Transverse colon (tissue), 4 donors: ENCODE measurements at regions of chr2 and their contacts with region 1.

Region 1: GRCh38 chr2:769771-770170 is 92.6 kb upstream of the TMEM18 start:
- DNase-seq: no peak
- H3K4me3 ChIP-seq: no peak overlapping the region
- H3K27ac ChIP-seq: no peak overlapping the region
- H3K4me1 ChIP-seq: no peaks in the 10 kb centered on the region
- H3K27me3 ChIP-seq: no peaks in the 10 kb centered on the region
- CTCF ChIP-seq: no peak
- EP300 ChIP-seq: no peak
- POLR2A ChIP-seq: no peak

Region 2: GRCh38 chr2:479490-480176 is 290.1 kb before region 1 on chr2:
- in situ Hi-C with region 1: no loop called
- intact Hi-C with region 1: no loop called
- DNase-seq: no peak
- H3K4me3 ChIP-seq: peak overlapping the region in 2 of 4 donors; percentile 6 to 16
- H3K27ac ChIP-seq: no peak overlapping the region
- H3K4me1 ChIP-seq: no peaks in the 10 kb centered on the region
- H3K27me3 ChIP-seq: peaks cover 5% of the 10 kb centered on the region
- CTCF ChIP-seq: no peak
- EP300 ChIP-seq: no peak
- POLR2A ChIP-seq: no peak

Region 3: GRCh38 chr2:746697-747096 is 23.1 kb before region 1 on chr2:
- in situ Hi-C with region 1: no loop called
- intact Hi-C with region 1: loop called (anchors 1 kb)
- DNase-seq: no peak
- H3K4me3 ChIP-seq: no peak overlapping the region
- H3K27ac ChIP-seq: no peak overlapping the region
- H3K4me1 ChIP-seq: no peaks in the 10 kb centered on the region
- H3K27me3 ChIP-seq: peaks cover 16% of the 10 kb centered on the region
- CTCF ChIP-seq: no peak
- EP300 ChIP-seq: no peak
- POLR2A ChIP-seq: no peak

Region 4: DNA sequence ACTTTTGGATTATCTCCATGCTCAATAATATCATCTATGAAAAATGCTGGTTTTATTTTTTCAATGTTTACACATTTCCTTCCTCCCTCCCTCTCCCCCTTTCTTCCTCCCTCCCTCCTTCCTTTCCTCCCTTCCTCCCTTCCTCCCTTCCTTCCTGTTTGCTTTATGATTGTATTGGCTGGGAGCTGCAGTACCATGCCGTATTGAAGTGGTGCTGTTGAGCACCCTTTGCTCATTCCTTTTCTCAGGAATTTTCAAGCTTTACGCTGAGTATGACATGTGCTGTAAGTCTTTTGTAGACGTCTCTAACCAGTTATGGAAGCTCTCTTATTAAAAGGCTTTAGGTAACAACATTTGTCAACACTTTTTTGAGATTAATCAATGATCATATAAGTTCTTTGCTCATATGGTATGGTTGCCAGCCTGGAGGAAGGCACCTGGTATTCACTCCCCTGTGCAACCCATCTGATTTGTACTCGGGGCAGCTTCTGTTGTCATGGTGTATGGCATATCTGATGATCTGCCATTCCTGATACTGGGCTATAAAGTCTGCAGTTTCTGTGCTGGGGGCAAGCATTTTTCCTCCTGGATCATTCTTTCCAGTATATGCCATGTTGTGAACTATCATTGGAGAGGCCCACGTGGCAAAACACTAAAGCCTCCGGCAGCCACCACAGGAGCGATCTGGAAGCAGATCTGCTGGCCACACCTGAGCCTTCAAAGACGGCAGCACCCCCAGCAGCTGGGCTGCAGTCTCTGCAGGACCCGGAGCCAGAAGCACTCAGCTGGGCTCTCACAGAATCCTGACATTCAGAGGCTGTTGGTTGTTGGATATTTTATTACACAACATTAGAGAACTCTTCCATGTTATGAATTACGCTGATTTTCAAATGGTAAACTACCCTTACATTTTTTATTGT is 281.6 kb after region 1 on chr2:
- in situ Hi-C with region 1: no loop called
- intact Hi-C with region 1: no loop called
- DNase-seq: no peak
- H3K4me3 ChIP-seq: no peak overlapping the region
- H3K27ac ChIP-seq: no peak overlapping the region
- H3K4me1 ChIP-seq: no peaks in the 10 kb centered on the region
- H3K27me3 ChIP-seq: no peaks in the 10 kb centered on the region
- CTCF ChIP-seq: no peak
- EP300 ChIP-seq: no peak
- POLR2A ChIP-seq: no peak